AG04449 (cell line): ENCODE measurements at regions of chr5 and their contacts with region 1.

Region 1: GRCh38 chr5:157366741-157367674 is 93.0 kb upstream of the NIPAL4 start:
- DNase-seq: peak; percentile 68
- H3K4me3 ChIP-seq: no peak overlapping the region
- CTCF ChIP-seq: peak; percentile 76

Region 2: GRCh38 chr5:156963125-156963524 is 403.9 kb before region 1 on chr5 and contains the start of gene TIMD4:
- CTCF ChIA-PET with region 1: no interaction called
- POLR2A ChIA-PET with region 1: no interaction called
- DNase-seq: no peak
- H3K4me3 ChIP-seq: no peak within 1 kb of the TSS
- CTCF ChIP-seq: no peak

Region 3: GRCh38 chr5:157189223-157189622 is 177.8 kb before region 1 on chr5:
- CTCF ChIA-PET with region 1: no interaction called
- POLR2A ChIA-PET with region 1: no interaction called
- DNase-seq: no peak
- H3K4me3 ChIP-seq: no peak overlapping the region
- CTCF ChIP-seq: no peak

Region 4: GRCh38 chr5:157233515-157233914 is 133.5 kb before region 1 on chr5:
- CTCF ChIA-PET with region 1: no interaction called
- POLR2A ChIA-PET with region 1: no interaction called
- DNase-seq: no peak
- H3K4me3 ChIP-seq: no peak overlapping the region
- CTCF ChIP-seq: no peak

Region 5: GRCh38 chr5:157342822-157343402 is 24.1 kb before region 1 on chr5:
- CTCF ChIA-PET with region 1: interaction called, 29 read pairs
- POLR2A ChIA-PET with region 1: interaction called, 3 read pairs
- DNase-seq: no peak
- H3K4me3 ChIP-seq: no peak overlapping the region
- CTCF ChIP-seq: peak; percentile 58

Region 6: DNA sequence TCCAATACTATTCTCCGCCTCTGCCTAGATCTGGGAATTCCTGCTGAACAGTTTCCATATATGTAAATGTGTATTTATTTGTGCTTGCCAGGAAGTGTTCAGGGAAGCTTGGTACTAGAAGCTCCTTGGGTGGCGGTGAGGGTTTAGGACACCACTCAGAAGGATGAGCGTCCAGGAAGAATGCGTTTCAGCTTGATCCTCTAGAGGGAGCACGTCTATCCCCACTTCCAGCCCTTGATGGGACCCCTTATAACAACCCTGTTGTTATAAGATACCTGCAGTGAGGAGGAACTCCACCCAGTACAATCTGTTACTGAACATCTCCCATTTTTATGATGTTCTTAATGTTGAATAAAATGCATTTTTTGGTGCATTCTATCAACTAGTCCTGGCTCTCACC is 12.2 kb before region 1 on chr5:
- CTCF ChIA-PET with region 1: interaction called, 44 read pairs
- POLR2A ChIA-PET with region 1: no interaction called
- DNase-seq: no peak
- H3K4me3 ChIP-seq: no peak overlapping the region
- CTCF ChIP-seq: peak; percentile 34

Region 7: DNA sequence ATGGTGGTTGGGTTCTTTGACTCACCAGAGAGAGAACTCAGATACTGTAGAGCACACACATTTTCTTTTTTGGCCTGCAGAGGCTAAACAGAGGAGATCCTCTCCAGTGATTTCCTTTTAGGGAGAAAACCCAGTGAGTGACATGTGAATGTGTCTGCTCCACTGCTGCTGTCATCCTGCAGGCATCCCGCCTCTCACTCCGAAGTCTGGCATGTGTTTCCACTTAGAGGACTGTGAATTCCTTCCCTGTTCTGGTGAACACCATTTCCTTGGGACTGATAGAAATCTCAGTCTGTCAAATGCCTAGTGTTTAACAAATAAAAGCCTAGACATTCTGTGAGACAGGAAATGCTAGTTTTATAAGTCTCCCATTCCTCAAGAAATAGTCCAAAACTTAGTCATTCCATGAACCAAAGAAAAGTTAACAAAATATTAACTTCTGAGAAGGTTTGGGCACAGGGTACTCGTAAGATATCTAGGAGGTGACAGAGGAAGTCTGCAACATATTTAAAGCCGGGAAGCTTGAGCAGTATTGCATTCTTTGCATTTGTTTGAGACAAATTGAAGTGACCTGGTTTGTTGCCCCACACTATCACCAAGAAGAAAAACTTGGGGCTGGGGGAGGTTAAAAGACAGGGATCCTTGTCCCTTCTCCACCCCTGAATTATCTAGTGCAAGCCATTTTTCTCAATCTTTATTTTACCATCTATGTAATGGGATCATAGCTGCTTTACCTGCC is 18.1 kb after region 1 on chr5:
- CTCF ChIA-PET with region 1: interaction called, 6 read pairs
- POLR2A ChIA-PET with region 1: interaction called, 25 read pairs
- DNase-seq: peak; percentile 100
- H3K4me3 ChIP-seq: no peak overlapping the region
- CTCF ChIP-seq: no peak

Region 8: DNA sequence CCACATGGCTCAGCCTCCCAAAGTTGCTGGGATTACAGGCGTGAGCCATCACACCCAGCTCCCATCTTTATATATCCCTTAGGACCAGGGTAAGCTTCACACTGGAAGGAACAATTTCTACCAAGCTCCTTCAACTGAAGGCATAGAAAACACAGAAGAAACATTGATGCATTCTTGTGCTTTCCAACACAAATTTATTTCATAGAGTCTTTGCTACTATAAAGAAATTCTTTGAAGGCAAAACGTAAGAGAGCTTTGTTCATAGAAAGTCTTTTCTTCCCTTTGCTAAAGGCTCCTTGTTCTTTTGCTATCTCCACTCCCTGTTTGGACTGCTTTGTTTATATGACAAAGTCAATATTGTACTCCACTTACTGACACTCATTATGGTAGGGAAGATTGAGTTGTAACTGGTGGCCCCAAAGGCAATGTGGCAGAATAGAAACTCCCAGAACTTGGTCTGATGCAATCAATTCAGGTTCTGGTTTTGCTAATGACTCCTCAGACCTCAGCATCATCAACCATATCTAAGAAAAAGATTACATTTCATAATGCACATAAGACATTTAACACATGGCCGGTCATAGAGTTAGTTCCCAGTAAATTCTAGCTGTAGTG is 589.4 kb after region 1 on chr5:
- CTCF ChIA-PET with region 1: no interaction called
- POLR2A ChIA-PET with region 1: no interaction called
- DNase-seq: no peak
- H3K4me3 ChIP-seq: no peak overlapping the region
- CTCF ChIP-seq: no peak